Activated CD8-positive, alpha-beta memory T cell treated with anti-CD3 and anti-CD28 coated beads, Interleukin-2, amount 10 ng/mL, durations not matched to agents 7 days and 5 days (primary cell): ENCODE measurements at regions of chr1 and their contacts with region 1.

Region 1: GRCh38 chr1:213122514-213122929 is 71.5 kb downstream of the RPS6KC1 start:
- DNase-seq: no peak
- ATAC-seq: no peak
- H3K4me3 Mint-ChIP-seq: no peak overlapping the region
- H3K27ac Mint-ChIP-seq: no peak overlapping the region
- H3K4me1 Mint-ChIP-seq: peaks cover 12% of the 10 kb centered on the region
- H3K27me3 Mint-ChIP-seq: no peaks in the 10 kb centered on the region

Region 2: DNA sequence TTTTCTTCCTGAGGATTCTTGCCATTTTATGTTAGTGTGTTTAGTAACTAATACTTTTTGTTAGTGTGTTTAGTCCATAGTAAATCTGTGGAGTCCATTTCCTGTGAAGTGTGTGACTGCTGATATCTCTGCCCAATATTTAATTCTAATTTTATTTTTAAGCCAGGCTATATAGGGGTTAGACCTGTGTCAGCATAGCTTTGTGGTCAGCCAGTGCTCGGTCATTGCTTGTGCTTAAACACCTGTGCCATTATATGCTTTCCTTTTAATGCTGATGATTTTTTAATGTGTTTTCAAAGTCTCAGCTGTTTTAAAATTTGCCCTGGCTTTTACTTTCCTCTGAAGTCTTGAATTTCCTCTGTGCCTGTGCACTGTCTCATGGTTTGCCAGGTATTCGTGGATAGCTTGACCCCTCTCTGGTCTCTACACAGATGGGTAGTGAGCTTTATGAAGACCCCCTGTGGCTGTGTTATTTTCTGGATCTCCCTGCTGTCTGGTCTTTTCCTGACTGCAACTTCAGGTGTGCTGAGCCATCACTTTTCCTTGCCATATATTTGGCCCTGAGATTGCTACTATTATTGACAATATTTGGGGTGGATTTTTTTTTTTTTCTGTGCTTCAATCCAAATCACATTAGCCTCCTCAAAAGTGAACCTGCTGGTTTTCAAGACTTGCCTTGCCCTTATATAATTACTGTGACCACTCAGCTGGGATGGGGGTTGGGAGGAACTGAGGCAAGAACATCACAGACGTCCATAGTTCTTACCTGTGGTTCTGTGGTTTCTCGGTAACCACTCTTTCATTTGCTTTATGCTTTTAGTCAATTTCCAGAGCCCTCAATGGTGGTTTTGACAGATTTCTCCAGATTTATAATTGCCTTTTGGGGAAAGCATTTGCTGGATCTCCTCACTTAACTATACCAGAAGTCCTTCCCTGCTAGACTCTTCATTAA is 11.9 kb before region 1 on chr1:
- CTCF ChIA-PET with region 1: interaction called, 10 read pairs
- DNase-seq: peak; percentile 42
- ATAC-seq: peak; percentile 33
- H3K4me3 Mint-ChIP-seq: no peak overlapping the region
- H3K27ac Mint-ChIP-seq: no peak overlapping the region
- H3K4me1 Mint-ChIP-seq: peaks cover 7% of the 10 kb centered on the region
- H3K27me3 Mint-ChIP-seq: no peaks in the 10 kb centered on the region